ENCODE measurements at regions of chr1 and their contacts with region 1.

Region 1: GRCh38 chr1:42958488-42959319 is at the start of gene SLC2A1:
- DNase-seq: peak; percentile 97
- ATAC-seq: peak; percentile 89
- H3K4me3 Mint-ChIP-seq: peak within 1 kb of the TSS; percentile 96
- H3K27ac Mint-ChIP-seq: peak within 1 kb of the TSS; percentile 100
- H3K4me1 Mint-ChIP-seq: peaks cover 46% of the 10 kb centered on the region
- H3K27me3 Mint-ChIP-seq: peaks cover 7% of the 10 kb centered on the region
- CTCF ChIP-seq: no peak
- total RNA-seq, gene SLC2A1: 158 to 162 TPM

Region 2: GRCh38 chr1:42941640-42942330 is 16.9 kb before region 1 on chr1:
- CTCF ChIA-PET with region 1: interaction called, 7 read pairs
- POLR2A ChIA-PET with region 1: interaction called, 117 read pairs
- intact Hi-C with region 1: no loop called
- DNase-seq: no peak
- ATAC-seq: no peak
- H3K4me3 Mint-ChIP-seq: no peak overlapping the region
- H3K27ac Mint-ChIP-seq: peak overlapping the region; percentile 78
- H3K4me1 Mint-ChIP-seq: peaks cover 98% of the 10 kb centered on the region
- H3K27me3 Mint-ChIP-seq: no peaks in the 10 kb centered on the region
- CTCF ChIP-seq: no peak

Region 3: DNA sequence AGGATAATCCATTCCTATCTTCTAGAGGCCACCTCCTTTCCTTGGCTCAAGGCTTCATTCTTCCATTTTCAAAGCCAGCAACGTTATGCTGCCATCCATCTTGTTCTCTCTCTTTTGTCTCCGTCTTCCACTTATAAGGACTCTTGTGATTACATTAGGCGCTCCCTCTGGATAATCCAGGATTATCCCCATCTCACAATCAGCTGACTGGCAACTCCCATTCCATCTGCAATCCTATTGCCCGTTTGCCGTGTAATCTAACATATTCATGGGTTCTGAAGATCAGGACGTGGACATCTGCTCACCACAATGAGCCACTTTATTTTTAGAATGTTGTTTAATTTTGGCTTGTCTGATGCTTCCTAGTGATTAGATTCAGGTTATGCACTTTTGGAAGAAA is 124.0 kb after region 1 on chr1:
- CTCF ChIA-PET with region 1: no interaction called
- POLR2A ChIA-PET with region 1: no interaction called
- intact Hi-C with region 1: no loop called
- DNase-seq: no peak
- ATAC-seq: no peak
- H3K4me3 Mint-ChIP-seq: no peak overlapping the region
- H3K27ac Mint-ChIP-seq: no peak overlapping the region
- H3K4me1 Mint-ChIP-seq: no peaks in the 10 kb centered on the region
- H3K27me3 Mint-ChIP-seq: no peaks in the 10 kb centered on the region
- CTCF ChIP-seq: no peak

Measured in activated CD8-positive, alpha-beta T cell treated with anti-CD3 and anti-CD28 coated beads for 36 hours (primary cell).